ENCODE measurements at regions of chr14 and their contacts with region 1.

Region 1: DNA sequence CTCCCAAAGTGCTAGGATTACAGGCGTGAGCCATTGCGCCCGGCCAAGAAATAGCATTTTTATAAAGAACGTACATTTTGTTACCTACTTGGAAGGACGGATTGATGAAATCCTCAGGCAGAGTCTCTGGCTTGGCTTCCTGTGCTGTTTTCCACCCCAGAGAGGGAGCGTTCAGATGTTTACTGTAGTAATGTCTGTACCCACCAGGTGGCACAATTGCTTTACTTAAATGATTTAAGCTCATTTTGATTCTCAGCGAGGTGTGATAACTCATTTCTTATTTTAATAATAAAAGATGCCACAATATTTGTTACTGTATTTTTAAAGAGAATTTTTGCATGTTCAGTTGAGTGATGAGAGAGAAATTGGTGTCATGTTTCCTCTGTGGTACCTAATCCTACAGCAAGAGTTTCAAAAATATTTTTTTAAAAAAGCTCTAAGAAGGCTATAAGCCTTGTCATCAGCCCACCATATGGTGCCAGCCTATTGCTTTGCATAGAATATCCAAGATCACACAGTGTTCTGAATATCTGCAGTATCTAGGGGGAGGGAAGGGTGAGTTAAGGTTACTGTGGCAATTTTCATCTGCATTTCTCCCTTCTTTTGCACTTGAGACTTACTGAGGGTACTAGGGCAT is 82.6 kb upstream of the TRAF3 start:
- DNase-seq: peak in 8 of 9 donors; percentile 45 to 71 (median 64)
- ATAC-seq: peak; percentile 87
- H3K4me3 ChIP-seq: no peak overlapping the region
- H3K4me3 Mint-ChIP-seq: no peak overlapping the region
- H3K27ac ChIP-seq: no peak overlapping the region
- H3K27ac Mint-ChIP-seq: peak overlapping the region in 3 of 9 donors; percentile 15 to 60 (median 43)
- H3K4me1 ChIP-seq: peaks cover 0 to 3% of the 10 kb centered on the region in 2 donors
- H3K4me1 Mint-ChIP-seq: peaks cover 25 to 50% (median 31%) of the 10 kb centered on the region in 7 donors
- H3K27me3 ChIP-seq: no peaks in the 10 kb centered on the region
- H3K27me3 Mint-ChIP-seq: no peaks in the 10 kb centered on the region

Region 2: DNA sequence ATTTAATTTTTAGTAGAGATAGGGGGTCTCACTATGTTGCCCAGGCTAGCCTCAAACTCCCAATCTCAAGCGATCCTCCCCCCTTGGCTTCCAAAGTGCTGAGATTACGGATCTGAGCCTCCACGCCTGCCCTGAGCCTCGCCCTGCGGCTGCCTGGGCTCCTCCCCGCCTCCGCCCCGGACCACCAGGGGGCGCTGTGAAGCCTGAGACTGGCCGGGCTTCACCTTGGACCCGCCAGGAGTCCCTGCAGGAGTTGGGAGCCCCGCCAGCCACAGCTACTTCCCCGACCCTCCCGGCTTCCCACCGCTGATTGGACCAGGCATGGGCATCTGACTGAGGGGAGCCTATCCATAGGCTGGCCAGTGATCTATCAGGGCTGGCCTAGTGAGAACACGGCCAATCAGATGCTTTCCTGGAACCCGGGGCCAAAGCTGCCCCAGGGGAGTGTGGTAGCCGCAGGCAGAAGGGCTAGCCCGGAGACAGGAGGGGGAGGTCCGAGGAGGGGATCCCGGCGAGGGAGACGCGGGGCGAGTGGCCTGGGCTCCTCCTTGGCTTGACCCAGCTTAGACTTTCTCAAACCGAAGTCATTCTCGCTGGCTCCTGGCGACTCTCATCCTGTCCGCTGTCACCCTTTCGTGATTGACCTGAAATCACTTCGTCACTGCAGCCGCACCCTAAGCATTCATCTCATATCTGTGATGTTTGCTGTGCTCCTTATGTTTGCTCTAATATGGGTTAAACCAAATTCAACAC is 170.0 kb before region 1 on chr14:
- CTCF ChIA-PET with region 1: no interaction called
- POLR2A ChIA-PET with region 1: no interaction called
- intact Hi-C with region 1: loop called (anchors 5 to 10 kb)
- DNase-seq: peak; percentile 75 to 99 (median 86)
- ATAC-seq: peak; percentile 92
- H3K4me3 ChIP-seq: peak overlapping the region; percentile 69
- H3K4me3 Mint-ChIP-seq: peak overlapping the region; percentile 73 to 90 (median 85)
- H3K27ac ChIP-seq: peak overlapping the region; percentile 60
- H3K27ac Mint-ChIP-seq: peak overlapping the region; percentile 21 to 94 (median 78)
- H3K4me1 ChIP-seq: peaks cover 16 to 18% of the 10 kb centered on the region in 2 donors
- H3K4me1 Mint-ChIP-seq: peaks cover 20 to 32% (median 29%) of the 10 kb centered on the region in 7 donors
- H3K27me3 ChIP-seq: no peaks in the 10 kb centered on the region
- H3K27me3 Mint-ChIP-seq: no peaks in the 10 kb centered on the region

Region 3: DNA sequence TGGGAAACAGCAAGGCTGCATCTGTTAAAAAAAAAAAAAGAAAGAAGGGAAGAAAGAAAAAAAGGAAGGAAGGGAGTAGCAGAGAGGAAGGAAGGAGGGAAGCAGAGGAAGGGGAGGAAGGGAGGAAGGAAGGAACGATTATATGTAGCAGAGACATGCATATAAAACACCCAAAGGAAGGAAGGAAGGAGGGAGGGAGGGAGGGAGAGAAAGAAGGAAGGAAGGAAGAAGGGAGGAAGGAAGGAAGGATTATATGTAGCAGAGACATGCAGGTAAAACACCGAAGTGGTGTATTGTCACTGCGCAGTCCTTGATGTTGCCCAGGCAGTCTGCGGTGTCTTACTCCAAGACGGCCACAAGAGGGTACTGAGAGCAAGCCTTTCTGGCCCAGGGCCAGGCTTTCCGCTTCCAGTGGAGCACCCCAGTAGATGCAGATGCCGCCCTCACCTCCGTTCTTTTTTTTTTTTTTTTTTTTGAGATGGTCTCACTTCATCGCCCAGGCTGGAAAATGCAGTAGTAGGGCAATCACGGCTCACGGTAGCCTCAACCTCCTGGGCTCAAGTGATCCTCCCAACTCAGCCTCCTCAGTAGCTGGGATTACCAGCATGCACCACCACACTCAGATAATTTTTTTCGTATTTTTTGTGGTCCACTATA is 383.6 kb after region 1 on chr14:
- CTCF ChIA-PET with region 1: interaction called, 5 read pairs
- POLR2A ChIA-PET with region 1: no interaction called
- intact Hi-C with region 1: loop called (anchors 1 to 5 kb)
- DNase-seq: peak; percentile 60 to 83 (median 74)
- ATAC-seq: peak; percentile 85
- H3K4me3 ChIP-seq: no peak overlapping the region
- H3K4me3 Mint-ChIP-seq: peak overlapping the region in 2 of 10 donors; percentile 3 to 37
- H3K27ac ChIP-seq: no peak overlapping the region
- H3K27ac Mint-ChIP-seq: no peak overlapping the region
- H3K4me1 ChIP-seq: peaks cover 0 to 5% of the 10 kb centered on the region in 2 donors
- H3K4me1 Mint-ChIP-seq: peaks cover 0 to 2% (median 0%) of the 10 kb centered on the region in 7 donors
- H3K27me3 ChIP-seq: no peaks in the 10 kb centered on the region
- H3K27me3 Mint-ChIP-seq: no peaks in the 10 kb centered on the region

Region 4: GRCh38 chr14:103104654-103105452 is 410.2 kb after region 1 on chr14:
- CTCF ChIA-PET with region 1: interaction called, 7 read pairs
- POLR2A ChIA-PET with region 1: no interaction called
- intact Hi-C with region 1: loop called in 1 of 2 experiments (anchors 1 kb)
- DNase-seq: peak; percentile 52 to 81 (median 73)
- ATAC-seq: peak; percentile 87
- H3K4me3 ChIP-seq: no peak overlapping the region
- H3K4me3 Mint-ChIP-seq: peak overlapping the region in 7 of 10 donors; percentile 5 to 64 (median 53)
- H3K27ac ChIP-seq: no peak overlapping the region
- H3K27ac Mint-ChIP-seq: peak overlapping the region in 2 of 9 donors; percentile 47 to 57
- H3K4me1 ChIP-seq: peaks cover 0 to 3% of the 10 kb centered on the region in 2 donors
- H3K4me1 Mint-ChIP-seq: peaks cover 0 to 16% (median 8%) of the 10 kb centered on the region in 7 donors
- H3K27me3 ChIP-seq: no peaks in the 10 kb centered on the region
- H3K27me3 Mint-ChIP-seq: peaks cover 21 to 39% (median 28%) of the 10 kb centered on the region in 5 donors

Region 5: GRCh38 chr14:103292426-103293374 is 598.1 kb after region 1 on chr14:
- CTCF ChIA-PET with region 1: interaction called, 4 read pairs
- POLR2A ChIA-PET with region 1: no interaction called
- intact Hi-C with region 1: loop called in 1 of 2 experiments (anchors 10 kb)
- DNase-seq: peak; percentile 34 to 77 (median 56)
- ATAC-seq: peak; percentile 92
- H3K4me3 ChIP-seq: no peak overlapping the region
- H3K4me3 Mint-ChIP-seq: no peak overlapping the region
- H3K27ac ChIP-seq: no peak overlapping the region
- H3K27ac Mint-ChIP-seq: no peak overlapping the region
- H3K4me1 ChIP-seq: no peaks in the 10 kb centered on the region
- H3K4me1 Mint-ChIP-seq: peaks cover 0 to 7% (median 0%) of the 10 kb centered on the region in 7 donors
- H3K27me3 ChIP-seq: no peaks in the 10 kb centered on the region
- H3K27me3 Mint-ChIP-seq: peaks cover 10 to 27% (median 20%) of the 10 kb centered on the region in 5 donors